ENCODE measurements at regions of chr9 and their contacts with region 1.

Region 1: DNA sequence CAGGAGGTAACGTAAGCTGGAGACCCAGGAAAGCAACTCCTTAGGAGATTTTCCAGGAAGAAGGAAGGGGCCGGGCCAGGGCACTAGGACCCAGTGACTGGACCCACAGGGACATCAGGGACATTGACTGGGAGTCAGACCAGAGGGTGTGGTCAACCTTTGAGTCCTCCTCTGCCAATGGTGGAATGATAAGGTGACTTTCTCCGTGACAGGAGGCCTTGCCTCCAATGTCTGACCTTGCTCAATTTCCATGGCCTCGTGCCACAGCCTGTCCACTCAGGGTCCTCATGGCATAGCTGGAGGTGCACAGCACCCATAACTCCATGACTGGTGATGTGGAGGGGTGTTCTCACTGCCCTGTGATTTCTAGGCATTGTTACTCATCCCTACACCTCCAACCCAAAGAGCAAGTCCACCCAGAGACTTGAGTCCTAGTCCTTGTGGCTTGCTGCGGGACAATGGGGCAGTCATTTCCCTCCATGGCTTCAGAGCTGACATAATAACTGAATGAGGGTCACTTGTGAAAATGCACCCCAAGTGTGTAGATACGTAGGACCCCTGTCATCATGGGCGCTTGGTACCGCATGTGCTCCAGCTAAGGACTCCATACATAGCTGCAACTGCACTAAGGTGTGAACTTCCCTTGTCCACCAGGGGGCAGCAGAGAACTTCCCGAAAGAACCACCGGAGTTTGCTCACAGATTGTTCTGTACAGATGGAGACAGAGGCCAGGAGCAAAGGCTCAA is 4.1 kb upstream of the AMBP start:
- DNase-seq: peak; percentile 88
- ATAC-seq: peak; percentile 89
- H3K4me3 Mint-ChIP-seq: no peak overlapping the region
- H3K27ac Mint-ChIP-seq: no peak overlapping the region
- H3K4me1 Mint-ChIP-seq: no peaks in the 10 kb centered on the region
- H3K27me3 Mint-ChIP-seq: no peaks in the 10 kb centered on the region

Region 2: GRCh38 chr9:114108016-114108833 is 26.0 kb after region 1 on chr9:
- CTCF ChIA-PET with region 1: interaction called, 37 read pairs
- POLR2A ChIA-PET with region 1: no interaction called
- DNase-seq: peak; percentile 75
- ATAC-seq: peak; percentile 96
- H3K4me3 Mint-ChIP-seq: no peak overlapping the region
- H3K27ac Mint-ChIP-seq: no peak overlapping the region
- H3K4me1 Mint-ChIP-seq: no peaks in the 10 kb centered on the region
- H3K27me3 Mint-ChIP-seq: peaks cover 20% of the 10 kb centered on the region